ENCODE measurements at regions of chr2 and their contacts with region 1.

Region 1: GRCh38 chr2:149597668-149598326 is 10.2 kb upstream of the MMADHC start:
- DNase-seq: peak; percentile 94
- ATAC-seq: peak; percentile 89
- H3K4me3 ChIP-seq: peak overlapping the region; percentile 13; the same call in 1 of the 2 replicates
- H3K27ac ChIP-seq: peak overlapping the region; percentile 64
- H3K4me1 ChIP-seq: peaks cover 8% of the 10 kb centered on the region
- H3K27me3 ChIP-seq: no peaks in the 10 kb centered on the region
- CTCF ChIP-seq: peak; percentile 93
- POLR2A ChIP-seq: 0 out of 2 replicates have a peak, but pooled peaks have one; percentile 40
- RAD21 ChIP-seq: peak; percentile 97

Region 2: DNA sequence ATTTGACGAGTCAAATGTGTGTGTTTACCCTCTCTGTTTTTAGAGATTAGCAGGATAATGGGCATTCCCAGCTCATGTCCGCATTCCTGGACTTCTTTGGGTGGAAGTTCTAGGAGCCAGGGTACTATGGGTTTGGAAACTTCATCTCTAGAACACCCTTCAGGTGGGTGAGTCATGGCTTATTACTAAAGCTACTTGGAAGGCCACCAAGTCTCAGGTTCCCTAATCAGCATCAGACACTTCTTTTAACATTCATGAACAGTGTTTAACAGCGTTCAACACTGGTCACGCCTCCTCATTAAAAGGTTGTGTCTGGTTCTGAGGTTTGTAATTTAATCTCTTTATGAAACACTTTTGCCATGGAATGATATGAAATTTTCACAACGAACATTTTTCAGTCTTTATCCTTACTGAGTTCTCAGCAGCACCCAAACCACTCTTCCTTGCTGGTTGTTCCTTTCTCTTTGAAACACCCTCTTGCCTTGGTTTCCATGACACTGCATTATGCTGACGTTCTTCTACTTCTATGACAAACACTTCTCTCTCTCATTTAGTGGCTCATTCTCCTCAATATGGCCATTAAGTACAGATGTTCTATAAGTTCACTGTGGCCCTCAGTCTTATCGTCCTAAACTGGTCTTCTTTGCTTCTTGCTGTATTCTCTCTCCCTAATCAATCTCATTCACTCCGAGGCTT is 59.5 kb before region 1 on chr2:
- CTCF ChIA-PET with region 1: no interaction called
- POLR2A ChIA-PET with region 1: no interaction called
- dilution Hi-C with region 1: no loop called
- in situ Hi-C with region 1: no loop called
- intact Hi-C with region 1: no loop called
- DNase-seq: no peak
- ATAC-seq: no peak
- H3K4me3 ChIP-seq: no peak overlapping the region
- H3K27ac ChIP-seq: no peak overlapping the region
- H3K4me1 ChIP-seq: no peaks in the 10 kb centered on the region
- H3K27me3 ChIP-seq: no peaks in the 10 kb centered on the region
- CTCF ChIP-seq: no peak
- POLR2A ChIP-seq: no peak
- RAD21 ChIP-seq: no peak

Region 3: DNA sequence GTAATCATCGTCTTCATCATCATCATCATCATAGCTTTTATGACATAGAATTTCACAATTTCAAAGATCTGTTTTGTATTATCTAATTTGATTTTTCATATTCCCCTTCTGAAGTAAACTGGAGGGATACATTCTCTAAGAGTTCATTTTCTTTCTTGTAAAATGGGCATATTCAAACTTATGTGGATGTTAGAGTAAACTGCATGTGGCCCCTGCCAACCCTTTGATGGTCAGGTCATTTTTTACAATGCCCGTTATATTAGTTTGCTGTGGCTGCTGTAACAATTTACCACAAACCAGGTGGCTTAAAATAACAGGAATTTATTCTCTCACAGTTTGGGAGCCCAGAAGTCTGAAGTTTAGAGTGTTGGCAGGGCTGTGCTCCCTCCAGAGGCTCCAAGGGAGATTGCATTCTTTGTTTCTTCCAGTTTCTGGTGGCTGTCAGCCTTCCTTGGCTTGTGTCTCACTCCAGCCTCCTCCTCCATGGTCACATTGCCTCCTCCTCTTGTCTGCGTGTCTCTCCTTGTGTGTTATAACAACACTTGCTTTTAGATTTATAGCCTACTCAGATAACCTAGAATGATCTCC is 117.3 kb after region 1 on chr2:
- CTCF ChIA-PET with region 1: no interaction called
- POLR2A ChIA-PET with region 1: no interaction called
- dilution Hi-C with region 1: no loop called
- in situ Hi-C with region 1: no loop called
- intact Hi-C with region 1: loop called (anchors 1 kb)
- DNase-seq: peak; percentile 55
- ATAC-seq: peak; percentile 80
- H3K4me3 ChIP-seq: no peak overlapping the region
- H3K27ac ChIP-seq: no peak overlapping the region
- H3K4me1 ChIP-seq: no peaks in the 10 kb centered on the region; the same call in 1 of the 2 replicates
- H3K27me3 ChIP-seq: no peaks in the 10 kb centered on the region
- CTCF ChIP-seq: peak; percentile 64
- POLR2A ChIP-seq: no peak
- RAD21 ChIP-seq: peak; percentile 68

Region 4: DNA sequence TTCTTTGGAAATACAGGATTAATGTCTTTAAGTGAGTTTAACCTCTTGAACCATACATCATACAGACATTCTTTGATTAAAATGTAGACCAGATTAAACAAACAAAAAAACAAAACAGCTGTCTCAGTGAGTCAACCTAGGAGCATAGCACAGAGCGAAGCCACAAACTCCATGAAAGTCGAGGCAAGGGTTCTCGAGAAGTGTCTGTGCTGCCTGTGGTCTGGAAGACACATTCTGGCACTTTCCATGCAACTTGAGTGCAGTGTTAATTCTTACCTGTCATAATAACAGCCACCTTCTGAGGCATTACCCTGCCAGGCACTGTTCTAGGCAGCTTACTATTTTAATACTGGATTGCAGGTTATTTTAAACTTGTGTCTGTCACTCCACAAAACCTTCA is 425.2 kb after region 1 on chr2:
- CTCF ChIA-PET with region 1: no interaction called
- POLR2A ChIA-PET with region 1: no interaction called
- dilution Hi-C with region 1: no loop called
- in situ Hi-C with region 1: no loop called
- intact Hi-C with region 1: loop called (anchors 10 kb)
- DNase-seq: no peak
- ATAC-seq: no peak
- H3K4me3 ChIP-seq: no peak overlapping the region
- H3K27ac ChIP-seq: no peak overlapping the region
- H3K4me1 ChIP-seq: no peaks in the 10 kb centered on the region
- H3K27me3 ChIP-seq: no peaks in the 10 kb centered on the region
- CTCF ChIP-seq: no peak
- POLR2A ChIP-seq: no peak
- RAD21 ChIP-seq: no peak

Region 5: GRCh38 chr2:150212722-150213171 is 615.0 kb after region 1 on chr2:
- CTCF ChIA-PET with region 1: no interaction called
- POLR2A ChIA-PET with region 1: no interaction called
- dilution Hi-C with region 1: no loop called
- in situ Hi-C with region 1: no loop called
- intact Hi-C with region 1: loop called (anchors 5 kb)
- DNase-seq: peak; percentile 77
- ATAC-seq: peak; percentile 28
- H3K4me3 ChIP-seq: no peak overlapping the region
- H3K27ac ChIP-seq: peak overlapping the region; percentile 60; the same call in 1 of the 2 replicates
- H3K4me1 ChIP-seq: peaks cover 18% of the 10 kb centered on the region
- H3K27me3 ChIP-seq: no peaks in the 10 kb centered on the region
- CTCF ChIP-seq: no peak
- POLR2A ChIP-seq: no peak
- RAD21 ChIP-seq: no peak

Region 6: GRCh38 chr2:150472511-150472899 is 874.7 kb after region 1 on chr2:
- CTCF ChIA-PET with region 1: interaction called, 3 read pairs
- POLR2A ChIA-PET with region 1: no interaction called
- dilution Hi-C with region 1: no loop called
- in situ Hi-C with region 1: loop called (anchors 5 kb)
- intact Hi-C with region 1: no loop called
- DNase-seq: peak; percentile 87
- ATAC-seq: peak; percentile 36
- H3K4me3 ChIP-seq: no peak overlapping the region
- H3K27ac ChIP-seq: no peak overlapping the region
- H3K4me1 ChIP-seq: peaks cover 18% of the 10 kb centered on the region
- H3K27me3 ChIP-seq: no peaks in the 10 kb centered on the region
- CTCF ChIP-seq: no peak
- POLR2A ChIP-seq: no peak
- RAD21 ChIP-seq: no peak

Region 7: GRCh38 chr2:150911766-150912280 is 1314.0 kb after region 1 on chr2:
- CTCF ChIA-PET with region 1: interaction called, 5 read pairs
- POLR2A ChIA-PET with region 1: no interaction called
- dilution Hi-C with region 1: no loop called
- in situ Hi-C with region 1: loop called (anchors 25 kb)
- intact Hi-C with region 1: loop called (anchors 10 kb)
- DNase-seq: peak; percentile 95
- ATAC-seq: peak; percentile 95
- H3K4me3 ChIP-seq: peak overlapping the region; percentile 17; the same call in 1 of the 2 replicates
- H3K27ac ChIP-seq: peak overlapping the region; percentile 43
- H3K4me1 ChIP-seq: peaks cover 7% of the 10 kb centered on the region; the same call in 1 of the 2 replicates
- H3K27me3 ChIP-seq: no peaks in the 10 kb centered on the region
- CTCF ChIP-seq: peak; percentile 54
- POLR2A ChIP-seq: no peak
- RAD21 ChIP-seq: peak; percentile 69

Region 8: GRCh38 chr2:151238527-151239487 is 1641.0 kb after region 1 on chr2:
- CTCF ChIA-PET with region 1: interaction called, 9 read pairs
- POLR2A ChIA-PET with region 1: no interaction called
- dilution Hi-C with region 1: no loop called
- in situ Hi-C with region 1: loop called (anchors 5 kb)
- intact Hi-C with region 1: loop called (anchors 2 kb)
- DNase-seq: peak; percentile 89
- ATAC-seq: peak; percentile 79
- H3K4me3 ChIP-seq: no peak overlapping the region
- H3K27ac ChIP-seq: no peak overlapping the region; the same call in 1 of the 2 replicates
- H3K4me1 ChIP-seq: peaks cover 9% of the 10 kb centered on the region
- H3K27me3 ChIP-seq: no peaks in the 10 kb centered on the region
- CTCF ChIP-seq: peak; percentile 95
- POLR2A ChIP-seq: peak; percentile 47; the same call in 1 of the 2 replicates
- RAD21 ChIP-seq: peak; percentile 99

Measured in IMR-90 (cell line).